ENCODE measurements at regions of chr15 and their contacts with region 1.

Region 1: DNA sequence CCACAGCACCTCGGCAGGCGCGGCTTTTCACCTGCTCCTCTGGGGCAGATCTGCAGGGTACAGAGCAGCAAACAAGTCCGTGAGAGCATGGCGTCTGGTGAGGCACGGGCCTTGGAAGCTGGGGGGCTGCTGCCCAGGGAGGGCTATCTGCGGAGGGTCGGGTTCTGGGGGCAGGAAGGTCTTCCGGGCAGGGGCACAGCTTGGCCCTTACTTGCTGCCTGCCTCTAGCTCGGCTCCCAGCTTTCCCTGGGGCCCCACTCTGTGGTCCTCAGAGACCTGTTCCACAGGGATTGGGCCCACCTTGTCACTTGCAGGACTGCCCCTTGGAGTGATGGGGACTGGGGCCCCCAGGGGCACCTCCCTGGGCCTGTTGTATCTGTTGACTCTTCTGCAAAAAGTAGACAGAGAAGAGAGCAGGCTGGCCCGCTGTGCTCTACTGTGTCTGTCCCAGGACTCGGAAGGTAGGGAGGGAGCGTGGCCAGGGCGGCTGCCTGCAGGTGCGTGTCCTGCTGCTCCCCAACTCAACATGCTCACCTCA is 84.1 kb downstream of the TBC1D2B start:
- DNase-seq: no peak
- H3K4me3 Mint-ChIP-seq: no peak overlapping the region
- H3K27ac Mint-ChIP-seq: peak overlapping the region; percentile 90
- H3K4me1 Mint-ChIP-seq: peaks cover 26% of the 10 kb centered on the region
- H3K27me3 Mint-ChIP-seq: no peaks in the 10 kb centered on the region
- CTCF ChIP-seq: no peak

Region 2: GRCh38 chr15:77966540-77967290 is 26.7 kb before region 1 on chr15:
- CTCF ChIA-PET with region 1: interaction called, 9 read pairs
- POLR2A ChIA-PET with region 1: no interaction called
- intact Hi-C with region 1: loop called (anchors 1 kb)
- DNase-seq: peak; percentile 61
- H3K4me3 Mint-ChIP-seq: no peak overlapping the region
- H3K27ac Mint-ChIP-seq: no peak overlapping the region
- H3K4me1 Mint-ChIP-seq: peaks cover 3% of the 10 kb centered on the region
- H3K27me3 Mint-ChIP-seq: peaks cover 20% of the 10 kb centered on the region
- CTCF ChIP-seq: peak; percentile 91

Measured in MCF 10A (cell line).